ENCODE measurements at regions of chr18 and their contacts with region 1.

Region 1: GRCh38 chr18:23412351-23412964 is 40.6 kb upstream of the RIOK3 start:
- DNase-seq: no peak
- ATAC-seq: no peak
- H3K4me3 Mint-ChIP-seq: no peak overlapping the region
- H3K27ac Mint-ChIP-seq: no peak overlapping the region
- H3K4me1 Mint-ChIP-seq: no peaks in the 10 kb centered on the region
- H3K27me3 Mint-ChIP-seq: no peaks in the 10 kb centered on the region

Region 2: DNA sequence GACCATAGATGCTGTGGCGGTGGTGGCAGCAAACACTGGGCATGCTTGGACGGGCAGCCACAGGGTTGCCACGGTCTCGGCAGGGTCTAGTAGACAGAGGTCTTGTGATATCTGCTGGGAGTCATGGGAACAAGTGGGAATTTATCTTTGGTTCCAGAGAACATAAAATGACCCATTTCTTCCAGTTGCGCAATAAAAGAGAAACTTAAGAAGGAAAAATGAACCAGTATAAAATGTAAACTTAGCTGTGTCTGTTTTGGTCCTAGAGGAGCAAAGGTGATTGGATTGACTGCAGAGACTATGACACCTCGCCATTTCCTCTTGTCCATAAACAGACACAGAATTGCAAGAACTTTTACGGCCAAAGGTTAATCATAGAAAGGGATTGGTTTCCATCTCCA is 611.9 kb before region 1 on chr18:
- CTCF ChIA-PET with region 1: interaction called, 13 read pairs
- POLR2A ChIA-PET with region 1: no interaction called
- intact Hi-C with region 1: loop called in 1 of 2 experiments (anchors 1 kb)
- DNase-seq: no peak
- ATAC-seq: no peak
- H3K4me3 Mint-ChIP-seq: no peak overlapping the region
- H3K27ac Mint-ChIP-seq: no peak overlapping the region
- H3K4me1 Mint-ChIP-seq: no peaks in the 10 kb centered on the region
- H3K27me3 Mint-ChIP-seq: peaks cover 2% of the 10 kb centered on the region

Region 3: GRCh38 chr18:22813648-22814328 is 598.7 kb before region 1 on chr18:
- CTCF ChIA-PET with region 1: interaction called, 3 read pairs
- POLR2A ChIA-PET with region 1: no interaction called
- intact Hi-C with region 1: loop called in 1 of 2 experiments (anchors 5 kb)
- DNase-seq: peak; percentile 19
- ATAC-seq: no peak
- H3K4me3 Mint-ChIP-seq: no peak overlapping the region
- H3K27ac Mint-ChIP-seq: no peak overlapping the region
- H3K4me1 Mint-ChIP-seq: no peaks in the 10 kb centered on the region
- H3K27me3 Mint-ChIP-seq: peaks cover 21% of the 10 kb centered on the region

Region 4: GRCh38 chr18:22912835-22913234 is 499.6 kb before region 1 on chr18:
- CTCF ChIA-PET with region 1: no interaction called
- POLR2A ChIA-PET with region 1: no interaction called
- intact Hi-C with region 1: no loop called
- DNase-seq: no peak
- ATAC-seq: no peak
- H3K4me3 Mint-ChIP-seq: no peak overlapping the region
- H3K27ac Mint-ChIP-seq: no peak overlapping the region
- H3K4me1 Mint-ChIP-seq: no peaks in the 10 kb centered on the region
- H3K27me3 Mint-ChIP-seq: peaks cover 2% of the 10 kb centered on the region

Region 5: DNA sequence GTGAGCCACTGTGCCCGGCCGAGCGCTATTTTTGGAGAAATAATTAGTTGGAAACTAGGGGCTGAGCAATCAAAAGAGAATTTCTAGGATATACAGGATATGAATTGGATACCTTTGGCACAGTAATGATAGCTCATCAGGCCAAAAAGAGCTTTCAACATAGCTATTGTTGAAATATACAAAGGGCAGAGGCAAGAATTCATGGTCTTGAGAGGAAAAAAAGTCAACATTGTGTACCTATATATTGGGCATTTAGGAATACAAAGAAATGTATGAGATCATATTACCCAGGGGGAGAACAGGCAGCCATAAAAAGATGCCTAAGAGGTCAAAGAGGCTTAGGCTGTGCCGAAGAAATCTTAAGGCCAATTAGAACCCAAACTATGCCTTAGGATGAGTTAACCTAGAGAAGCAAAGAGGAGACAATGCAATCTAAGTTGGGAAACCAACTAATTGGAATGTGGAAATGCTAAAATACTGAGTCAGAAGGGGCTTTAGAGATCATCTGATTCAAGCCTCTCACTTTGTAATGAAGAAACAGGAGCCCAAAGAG is 380.4 kb before region 1 on chr18:
- CTCF ChIA-PET with region 1: interaction called, 11 read pairs
- POLR2A ChIA-PET with region 1: no interaction called
- intact Hi-C with region 1: loop called (anchors 1 to 5 kb)
- DNase-seq: no peak
- ATAC-seq: no peak
- H3K4me3 Mint-ChIP-seq: no peak overlapping the region
- H3K27ac Mint-ChIP-seq: no peak overlapping the region
- H3K4me1 Mint-ChIP-seq: no peaks in the 10 kb centered on the region
- H3K27me3 Mint-ChIP-seq: no peaks in the 10 kb centered on the region

Region 6: GRCh38 chr18:23126376-23127056 is 285.9 kb before region 1 on chr18:
- CTCF ChIA-PET with region 1: interaction called, 40 read pairs
- POLR2A ChIA-PET with region 1: no interaction called
- intact Hi-C with region 1: loop called (anchors 1 kb)
- DNase-seq: no peak
- ATAC-seq: no peak
- H3K4me3 Mint-ChIP-seq: no peak overlapping the region
- H3K27ac Mint-ChIP-seq: no peak overlapping the region
- H3K4me1 Mint-ChIP-seq: no peaks in the 10 kb centered on the region
- H3K27me3 Mint-ChIP-seq: peaks cover 2% of the 10 kb centered on the region

Region 7: DNA sequence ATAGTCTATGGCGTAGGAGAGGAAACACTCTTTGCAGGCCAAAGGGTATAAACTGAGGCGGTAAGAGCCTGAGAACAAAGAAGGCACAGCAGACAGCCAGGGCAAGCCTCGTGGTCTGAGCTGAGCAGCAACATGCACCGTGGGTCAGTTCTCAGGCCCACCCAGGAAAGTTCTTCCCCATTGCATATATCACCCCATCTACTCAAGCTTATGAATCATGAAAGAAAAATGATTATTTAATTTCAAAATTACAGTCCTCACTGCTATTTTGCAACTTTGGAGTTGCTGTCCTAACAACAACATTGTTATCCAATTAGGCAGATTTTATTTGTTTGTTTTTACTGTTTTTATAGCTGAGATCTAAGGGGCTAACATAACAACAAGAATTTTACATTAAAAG is 14.1 kb before region 1 on chr18:
- CTCF ChIA-PET with region 1: interaction called, 16 read pairs
- POLR2A ChIA-PET with region 1: no interaction called
- intact Hi-C with region 1: no loop called
- DNase-seq: no peak
- ATAC-seq: peak; percentile 16
- H3K4me3 Mint-ChIP-seq: no peak overlapping the region
- H3K27ac Mint-ChIP-seq: no peak overlapping the region
- H3K4me1 Mint-ChIP-seq: peaks cover 17% of the 10 kb centered on the region
- H3K27me3 Mint-ChIP-seq: no peaks in the 10 kb centered on the region